GM12878 (cell line): ENCODE measurements at regions of chr4 and their contacts with region 1.

Region 1: GRCh38 chr4:152640058-152640833 is 39.6 kb downstream of the TMEM154 start:
- DNase-seq: no peak
- ATAC-seq: 0 out of 3 replicates have a peak, but pooled peaks have one; percentile 3
- H3K4me3 ChIP-seq: no peak overlapping the region
- H3K27ac ChIP-seq: no peak overlapping the region; the same call in 1 of the 2 replicates
- H3K4me1 ChIP-seq: peaks cover 65% of the 10 kb centered on the region
- H3K27me3 ChIP-seq: no peaks in the 10 kb centered on the region
- CTCF ChIP-seq: peak; percentile 34 to 63 (median 49); a peak in 4 of 6 replicates
- EP300 ChIP-seq: no peak
- POLR2A ChIP-seq: no peak
- RAD21 ChIP-seq: peak; percentile 75

Region 2: DNA sequence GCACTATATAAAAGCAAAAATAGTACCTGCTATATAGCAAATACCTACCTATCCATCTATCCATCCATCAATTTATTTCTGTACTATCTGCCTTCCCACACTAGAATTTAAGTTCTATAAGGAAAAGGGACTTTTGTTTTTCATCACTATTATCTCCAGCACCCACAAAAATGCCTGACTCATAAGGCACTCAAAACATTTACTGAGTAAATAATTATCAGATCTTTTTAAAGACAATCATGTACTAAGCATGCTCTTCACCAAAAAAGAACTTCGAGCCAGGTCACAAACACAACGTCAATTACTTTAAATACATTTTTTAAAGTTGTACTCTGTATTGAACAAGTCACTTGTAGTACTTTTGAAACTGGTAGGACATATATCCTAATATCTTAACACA is 224.3 kb before region 1 on chr4:
- CTCF ChIA-PET with region 1: interaction called, 77 read pairs
- POLR2A ChIA-PET with region 1: no interaction called
- RAD21 ChIA-PET with region 1: interaction called, 5 read pairs
- SMC1A ChIA-PET with region 1: interaction called, 58 read pairs
- in situ Hi-C with region 1: no loop called
- intact Hi-C with region 1: no loop called
- DNase-seq: no peak
- ATAC-seq: no peak
- H3K4me3 ChIP-seq: no peak overlapping the region
- H3K27ac ChIP-seq: no peak overlapping the region
- H3K4me1 ChIP-seq: no peaks in the 10 kb centered on the region
- H3K27me3 ChIP-seq: no peaks in the 10 kb centered on the region
- CTCF ChIP-seq: no peak
- EP300 ChIP-seq: no peak
- POLR2A ChIP-seq: no peak
- RAD21 ChIP-seq: no peak

Region 3: GRCh38 chr4:152485726-152486276 is 154.4 kb before region 1 on chr4:
- CTCF ChIA-PET with region 1: interaction called, 17 read pairs
- POLR2A ChIA-PET with region 1: interaction called, 12 read pairs
- RAD21 ChIA-PET with region 1: interaction called, 27 read pairs
- SMC1A ChIA-PET with region 1: interaction called, 14 read pairs
- in situ Hi-C with region 1: no loop called
- intact Hi-C with region 1: no loop called
- DNase-seq: peak; percentile 86
- ATAC-seq: peak; percentile 98
- H3K4me3 ChIP-seq: no peak overlapping the region
- H3K27ac ChIP-seq: peak overlapping the region; percentile 58
- H3K4me1 ChIP-seq: peaks cover 7% of the 10 kb centered on the region
- H3K27me3 ChIP-seq: no peaks in the 10 kb centered on the region
- CTCF ChIP-seq: no peak
- EP300 ChIP-seq: peak; percentile 85 to 87; a peak in 3 of 4 replicates
- POLR2A ChIP-seq: no peak
- RAD21 ChIP-seq: no peak

Region 4: DNA sequence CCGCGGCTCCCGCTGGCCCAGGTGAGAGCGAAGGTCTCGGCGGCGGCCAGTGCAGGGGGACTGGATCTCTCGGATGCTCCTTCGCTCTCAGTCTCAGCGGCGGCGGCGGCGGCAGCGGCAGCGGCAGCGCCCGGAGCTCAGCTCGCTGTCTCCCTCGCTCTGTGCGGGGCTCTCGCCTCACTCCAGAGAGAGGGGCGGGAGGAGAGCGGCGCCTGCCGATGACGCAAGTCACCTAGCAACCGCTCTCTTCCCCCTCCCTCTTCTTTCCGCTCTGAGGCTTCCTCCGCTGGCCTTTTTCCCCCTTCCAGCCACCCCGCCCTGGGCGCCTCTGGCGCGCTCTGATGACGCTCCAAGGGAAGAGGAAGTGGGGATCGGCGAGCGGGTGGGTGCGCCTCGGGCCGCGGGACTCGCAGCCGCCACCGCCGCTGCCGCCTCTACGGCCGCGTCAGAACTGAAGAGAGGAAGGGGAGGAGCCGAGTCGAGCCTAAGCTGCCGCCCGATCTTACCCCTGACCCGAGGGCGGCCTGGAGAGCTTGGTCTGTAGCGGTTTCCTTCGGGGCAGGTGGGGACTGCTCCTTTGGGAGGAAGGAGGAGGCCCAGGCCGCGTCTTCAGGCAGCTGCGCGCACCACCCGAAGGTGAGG is 104.2 kb before region 1 on chr4 and contains the start of gene FBXW7:
- CTCF ChIA-PET with region 1: interaction called, 71 read pairs
- POLR2A ChIA-PET with region 1: interaction called, 18 read pairs
- RAD21 ChIA-PET with region 1: interaction called, 123 read pairs
- SMC1A ChIA-PET with region 1: interaction called, 228 read pairs
- in situ Hi-C with region 1: no loop called
- intact Hi-C with region 1: loop called (anchors 1 kb)
- DNase-seq: peak; percentile 98
- ATAC-seq: peak; percentile 84
- H3K4me3 ChIP-seq: peak within 1 kb of the TSS; percentile 92
- H3K27ac ChIP-seq: peak within 1 kb of the TSS; percentile 96
- H3K4me1 ChIP-seq: peaks cover 21% of the 10 kb centered on the region
- H3K27me3 ChIP-seq: no peaks in the 10 kb centered on the region
- CTCF ChIP-seq: no peak
- EP300 ChIP-seq: peak in 1 of 2 experiments; percentile 75; a peak in 3 of 4 replicates
- POLR2A ChIP-seq: peak; percentile 90
- RAD21 ChIP-seq: no peak
- polyA plus RNA-seq, gene FBXW7: 40.2 to 42.5 TPM

Region 5: GRCh38 chr4:152663203-152664066 is 23.2 kb after region 1 on chr4:
- CTCF ChIA-PET with region 1: interaction called, 31 read pairs
- POLR2A ChIA-PET with region 1: interaction called, 25 read pairs
- RAD21 ChIA-PET with region 1: interaction called, 18 read pairs
- SMC1A ChIA-PET with region 1: interaction called, 134 read pairs
- in situ Hi-C with region 1: no loop called
- intact Hi-C with region 1: loop called (anchors 1 kb)
- DNase-seq: peak; percentile 75
- ATAC-seq: peak; percentile 78
- H3K4me3 ChIP-seq: peak overlapping the region; percentile 51; the same call in 1 of the 2 replicates
- H3K27ac ChIP-seq: peak overlapping the region; percentile 79
- H3K4me1 ChIP-seq: peaks cover 66% of the 10 kb centered on the region
- H3K27me3 ChIP-seq: no peaks in the 10 kb centered on the region
- CTCF ChIP-seq: no peak
- EP300 ChIP-seq: peak in 1 of 2 experiments; percentile 32; a peak in 1 of 4 replicates
- POLR2A ChIP-seq: no peak
- RAD21 ChIP-seq: no peak

Region 6: DNA sequence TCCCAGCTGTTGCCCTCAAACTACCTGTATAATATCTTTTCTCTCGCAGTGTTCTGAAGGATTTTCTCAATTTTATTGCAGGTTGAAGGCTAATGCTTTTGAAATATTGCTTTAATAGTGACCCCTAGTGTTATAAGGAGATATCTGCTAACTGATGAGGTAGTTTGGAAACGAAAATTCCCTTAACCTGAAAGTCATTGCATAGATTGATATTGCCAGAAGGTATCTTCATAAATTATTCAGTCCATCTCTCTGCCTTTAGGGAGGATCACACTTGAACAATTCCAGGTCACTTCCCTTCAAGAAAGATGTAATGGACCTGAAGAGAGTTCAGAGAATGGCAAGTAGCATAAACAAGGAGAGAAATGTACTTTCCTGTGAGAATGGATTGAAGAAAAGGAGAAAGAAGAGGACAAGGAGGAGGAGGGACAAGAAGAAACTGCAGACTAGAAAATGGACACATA is 95.2 kb after region 1 on chr4:
- CTCF ChIA-PET with region 1: interaction called, 105 read pairs
- POLR2A ChIA-PET with region 1: no interaction called
- RAD21 ChIA-PET with region 1: interaction called, 39 read pairs
- SMC1A ChIA-PET with region 1: interaction called, 115 read pairs
- in situ Hi-C with region 1: no loop called
- intact Hi-C with region 1: loop called (anchors 1 kb)
- DNase-seq: peak; percentile 32
- ATAC-seq: peak; percentile 81
- H3K4me3 ChIP-seq: no peak overlapping the region
- H3K27ac ChIP-seq: no peak overlapping the region
- H3K4me1 ChIP-seq: peaks cover 8% of the 10 kb centered on the region; the same call in 1 of the 2 replicates
- H3K27me3 ChIP-seq: no peaks in the 10 kb centered on the region
- CTCF ChIP-seq: peak; percentile 58 to 71 (median 60); a peak in 5 of 6 replicates
- EP300 ChIP-seq: no peak
- POLR2A ChIP-seq: no peak
- RAD21 ChIP-seq: peak; percentile 85

Region 7: GRCh38 chr4:152763796-152764195 is 123.5 kb after region 1 on chr4:
- CTCF ChIA-PET with region 1: no interaction called
- POLR2A ChIA-PET with region 1: no interaction called
- RAD21 ChIA-PET with region 1: no interaction called
- SMC1A ChIA-PET with region 1: no interaction called
- in situ Hi-C with region 1: no loop called
- intact Hi-C with region 1: no loop called
- DNase-seq: no peak
- ATAC-seq: no peak
- H3K4me3 ChIP-seq: no peak overlapping the region
- H3K27ac ChIP-seq: no peak overlapping the region
- H3K4me1 ChIP-seq: no peaks in the 10 kb centered on the region
- H3K27me3 ChIP-seq: no peaks in the 10 kb centered on the region
- CTCF ChIP-seq: no peak
- EP300 ChIP-seq: no peak
- POLR2A ChIP-seq: no peak
- RAD21 ChIP-seq: no peak

Region 8: DNA sequence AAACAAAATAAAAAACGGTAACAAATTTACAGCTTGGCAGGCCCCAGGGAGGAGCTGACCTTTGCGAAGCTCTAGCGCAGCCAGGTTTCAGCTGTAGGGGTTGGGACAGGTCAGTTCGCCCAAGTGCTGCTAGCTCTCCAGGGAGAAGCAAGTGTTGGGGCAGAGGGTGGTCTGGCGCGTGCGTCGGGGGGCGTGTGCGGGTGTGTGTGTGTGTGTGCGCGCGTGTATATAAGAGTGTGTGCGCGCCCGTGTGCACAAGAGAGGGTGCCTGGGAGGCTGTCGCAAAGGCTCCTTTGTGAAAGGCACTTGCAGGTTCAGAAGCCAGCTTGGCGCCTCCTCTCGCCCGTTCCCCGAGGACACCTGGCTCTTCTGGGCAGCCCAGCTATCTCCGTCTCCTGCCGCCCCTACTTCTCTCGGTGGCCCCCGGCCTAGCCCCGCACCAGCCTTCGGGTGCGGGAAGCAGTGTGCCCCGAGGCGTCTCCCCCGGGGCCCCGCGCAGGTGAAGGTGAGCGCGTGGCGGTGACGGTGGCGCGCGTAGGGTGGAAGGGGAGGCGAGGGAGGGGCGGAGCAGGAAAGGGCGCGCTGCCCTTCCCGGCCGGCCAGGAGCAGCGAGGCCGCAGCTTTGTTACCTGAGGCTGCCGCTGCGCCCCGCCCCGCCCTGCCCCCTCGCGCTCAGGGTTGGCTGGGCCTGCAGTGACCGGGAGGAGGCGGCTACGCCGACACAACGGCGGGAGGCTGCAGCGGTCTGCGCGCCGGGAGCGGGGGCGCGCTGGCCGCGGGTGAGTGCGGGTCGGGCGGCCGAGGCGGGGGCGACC is 295.6 kb after region 1 on chr4 and contains the start of gene FHDC1:
- CTCF ChIA-PET with region 1: no interaction called
- POLR2A ChIA-PET with region 1: no interaction called
- RAD21 ChIA-PET with region 1: no interaction called
- SMC1A ChIA-PET with region 1: no interaction called
- in situ Hi-C with region 1: no loop called
- intact Hi-C with region 1: no loop called
- DNase-seq: no peak
- ATAC-seq: peak; percentile 59
- H3K4me3 ChIP-seq: peak within 1 kb of the TSS; percentile 74
- H3K27ac ChIP-seq: no peak within 1 kb of the TSS
- H3K4me1 ChIP-seq: peaks cover 10% of the 10 kb centered on the region
- H3K27me3 ChIP-seq: peaks cover 11 to 20% of the 10 kb centered on the region in 2 experiments
- CTCF ChIP-seq: no peak
- EP300 ChIP-seq: no peak
- POLR2A ChIP-seq: no peak
- RAD21 ChIP-seq: no peak
- polyA plus RNA-seq, gene FHDC1: 0.04 TPM in 1 of 2 experiments, not detected in the other

Region 9: GRCh38 chr4:153211986-153212729 is 571.9 kb after region 1 on chr4:
- CTCF ChIA-PET with region 1: no interaction called
- POLR2A ChIA-PET with region 1: no interaction called
- RAD21 ChIA-PET with region 1: no interaction called
- SMC1A ChIA-PET with region 1: no interaction called
- in situ Hi-C with region 1: no loop called
- intact Hi-C with region 1: no loop called
- DNase-seq: no peak
- ATAC-seq: no peak
- H3K4me3 ChIP-seq: no peak overlapping the region
- H3K27ac ChIP-seq: no peak overlapping the region
- H3K4me1 ChIP-seq: no peaks in the 10 kb centered on the region
- H3K27me3 ChIP-seq: no peaks in the 10 kb centered on the region; a peak in 1 of 4 replicates
- CTCF ChIP-seq: no peak
- EP300 ChIP-seq: no peak
- POLR2A ChIP-seq: no peak
- RAD21 ChIP-seq: no peak